ENCODE measurements at regions of chr11 and their contacts with region 1.

Region 1: GRCh38 chr11:72430741-72431570 is 3.4 kb downstream of the CLPB start:
- DNase-seq: no peak
- ATAC-seq: peak; percentile 63
- H3K4me3 ChIP-seq: no peak overlapping the region
- H3K27ac ChIP-seq: peak overlapping the region; percentile 24; the same call in 1 of the 2 replicates
- H3K4me1 ChIP-seq: peaks cover 12% of the 10 kb centered on the region
- H3K27me3 ChIP-seq: no peaks in the 10 kb centered on the region
- CTCF ChIP-seq: peak; percentile 79 to 94 (median 92)
- EP300 ChIP-seq: no peak
- POLR2A ChIP-seq: no peak
- RAD21 ChIP-seq: peak; percentile 89

Region 2: GRCh38 chr11:72030472-72031045 is 400.4 kb before region 1 on chr11:
- CTCF ChIA-PET with region 1: interaction called, 30 read pairs
- POLR2A ChIA-PET with region 1: interaction called, 3 read pairs
- RAD21 ChIA-PET with region 1: interaction called, 26 read pairs
- SMC1A ChIA-PET with region 1: interaction called, 20 read pairs
- in situ Hi-C with region 1: no loop called
- intact Hi-C with region 1: loop called (anchors 5 kb)
- DNase-seq: no peak
- ATAC-seq: no peak
- H3K4me3 ChIP-seq: no peak overlapping the region
- H3K27ac ChIP-seq: no peak overlapping the region
- H3K4me1 ChIP-seq: no peaks in the 10 kb centered on the region
- H3K27me3 ChIP-seq: no peaks in the 10 kb centered on the region
- CTCF ChIP-seq: no peak
- EP300 ChIP-seq: no peak
- POLR2A ChIP-seq: no peak
- RAD21 ChIP-seq: no peak

Region 3: DNA sequence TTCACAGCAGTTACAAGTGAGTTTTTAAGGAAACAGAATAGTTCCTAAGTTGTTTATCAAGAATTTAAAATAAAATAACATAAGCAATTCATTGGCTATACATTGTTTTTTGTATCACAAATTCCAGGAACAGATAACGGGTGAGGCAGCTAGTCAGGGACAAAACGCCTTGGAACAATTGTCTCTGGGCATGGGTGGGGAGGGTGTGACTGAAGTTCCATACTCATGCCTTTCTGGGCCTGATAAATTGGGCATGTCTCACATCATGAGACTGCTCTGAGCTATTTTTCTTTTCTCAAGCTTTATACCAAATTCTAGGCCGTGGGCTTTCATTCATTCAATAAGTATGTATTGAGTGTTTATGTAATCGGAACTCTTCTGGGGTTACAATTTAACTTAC is 273.8 kb before region 1 on chr11:
- CTCF ChIA-PET with region 1: interaction called, 10 read pairs
- POLR2A ChIA-PET with region 1: no interaction called
- RAD21 ChIA-PET with region 1: no interaction called
- SMC1A ChIA-PET with region 1: interaction called, 3 read pairs
- in situ Hi-C with region 1: no loop called
- intact Hi-C with region 1: no loop called
- DNase-seq: no peak
- ATAC-seq: no peak
- H3K4me3 ChIP-seq: no peak overlapping the region
- H3K27ac ChIP-seq: no peak overlapping the region
- H3K4me1 ChIP-seq: no peaks in the 10 kb centered on the region
- H3K27me3 ChIP-seq: no peaks in the 10 kb centered on the region
- CTCF ChIP-seq: no peak
- EP300 ChIP-seq: no peak
- POLR2A ChIP-seq: no peak
- RAD21 ChIP-seq: no peak

Region 4: DNA sequence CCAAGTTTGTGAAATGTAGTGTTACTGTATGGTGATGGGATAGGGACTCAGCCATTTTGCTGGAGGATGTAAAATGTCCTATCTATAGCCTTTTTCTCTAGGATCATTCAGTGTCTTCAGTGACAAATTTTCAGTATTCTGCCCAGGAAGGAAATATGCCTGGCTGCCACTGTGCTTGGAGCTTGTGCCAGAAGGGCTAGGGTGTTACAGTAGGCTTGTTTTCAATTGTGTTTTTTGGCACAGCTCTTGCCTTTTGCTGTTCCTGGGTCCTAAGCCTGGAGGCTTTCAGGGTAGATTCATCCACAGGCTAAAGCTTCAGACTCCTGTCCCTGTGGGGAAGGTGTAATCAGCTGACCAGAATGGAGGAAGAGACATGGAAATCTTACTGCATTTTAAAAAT is 165.0 kb before region 1 on chr11:
- CTCF ChIA-PET with region 1: interaction called, 22 read pairs
- POLR2A ChIA-PET with region 1: no interaction called
- RAD21 ChIA-PET with region 1: interaction called, 4 read pairs
- SMC1A ChIA-PET with region 1: interaction called, 13 read pairs
- in situ Hi-C with region 1: no loop called
- intact Hi-C with region 1: loop called (anchors 5 kb)
- DNase-seq: no peak
- ATAC-seq: no peak
- H3K4me3 ChIP-seq: no peak overlapping the region
- H3K27ac ChIP-seq: no peak overlapping the region
- H3K4me1 ChIP-seq: peaks cover 2% of the 10 kb centered on the region; the same call in 1 of the 2 replicates
- H3K27me3 ChIP-seq: no peaks in the 10 kb centered on the region
- CTCF ChIP-seq: no peak
- EP300 ChIP-seq: no peak
- POLR2A ChIP-seq: no peak
- RAD21 ChIP-seq: no peak

Region 5: GRCh38 chr11:72328366-72329224 is 102.4 kb before region 1 on chr11:
- CTCF ChIA-PET with region 1: interaction called, 16 read pairs
- POLR2A ChIA-PET with region 1: no interaction called
- RAD21 ChIA-PET with region 1: interaction called, 9 read pairs
- SMC1A ChIA-PET with region 1: interaction called, 8 read pairs
- in situ Hi-C with region 1: no loop called
- intact Hi-C with region 1: loop called (anchors 5 kb)
- DNase-seq: no peak
- ATAC-seq: no peak
- H3K4me3 ChIP-seq: no peak overlapping the region
- H3K27ac ChIP-seq: no peak overlapping the region
- H3K4me1 ChIP-seq: no peaks in the 10 kb centered on the region
- H3K27me3 ChIP-seq: no peaks in the 10 kb centered on the region
- CTCF ChIP-seq: peak in 1 of 3 experiments; percentile 7; a peak in 1 of 6 replicates
- EP300 ChIP-seq: no peak
- POLR2A ChIP-seq: no peak
- RAD21 ChIP-seq: 0 out of 2 replicates have a peak, but pooled peaks have one; percentile 17

Region 6: GRCh38 chr11:72413914-72414628 is 16.9 kb before region 1 on chr11:
- CTCF ChIA-PET with region 1: interaction called, 378 read pairs
- POLR2A ChIA-PET with region 1: interaction called, 5 read pairs
- RAD21 ChIA-PET with region 1: interaction called, 53 read pairs
- SMC1A ChIA-PET with region 1: interaction called, 60 read pairs
- in situ Hi-C with region 1: no loop called
- intact Hi-C with region 1: no loop called
- DNase-seq: no peak
- ATAC-seq: peak; percentile 83
- H3K4me3 ChIP-seq: no peak overlapping the region
- H3K27ac ChIP-seq: peak overlapping the region; percentile 53
- H3K4me1 ChIP-seq: peaks cover 23% of the 10 kb centered on the region
- H3K27me3 ChIP-seq: no peaks in the 10 kb centered on the region
- CTCF ChIP-seq: peak; percentile 92 to 98 (median 96); a peak in 5 of 6 replicates
- EP300 ChIP-seq: no peak
- POLR2A ChIP-seq: no peak
- RAD21 ChIP-seq: peak; percentile 81

Region 7: GRCh38 chr11:72598906-72599305 is 167.9 kb after region 1 on chr11:
- CTCF ChIA-PET with region 1: no interaction called
- POLR2A ChIA-PET with region 1: no interaction called
- RAD21 ChIA-PET with region 1: no interaction called
- SMC1A ChIA-PET with region 1: no interaction called
- in situ Hi-C with region 1: no loop called
- intact Hi-C with region 1: no loop called
- DNase-seq: no peak
- ATAC-seq: peak; percentile 58; the same call in 2 of the 3 replicates
- H3K4me3 ChIP-seq: no peak overlapping the region
- H3K27ac ChIP-seq: no peak overlapping the region
- H3K4me1 ChIP-seq: no peaks in the 10 kb centered on the region
- H3K27me3 ChIP-seq: peaks cover 0 to 1% of the 10 kb centered on the region in 2 experiments; a peak in 2 of 4 replicates
- CTCF ChIP-seq: peak in 2 of 3 experiments; percentile 14 to 23; a peak in 3 of 6 replicates
- EP300 ChIP-seq: no peak
- POLR2A ChIP-seq: no peak
- RAD21 ChIP-seq: no peak